CD14-positive monocyte (primary cell): ENCODE measurements at regions of chr4 and their contacts with region 1.

Region 1: GRCh38 chr4:42562016-42562415 is 94.9 kb downstream of the ATP8A1 start:
- DNase-seq: no peak
- H3K4me3 ChIP-seq: no peak overlapping the region
- H3K4me3 Mint-ChIP-seq: no peak overlapping the region
- H3K27ac ChIP-seq: no peak overlapping the region
- H3K27ac Mint-ChIP-seq: no peak overlapping the region
- H3K4me1 ChIP-seq: no peaks in the 10 kb centered on the region
- H3K4me1 Mint-ChIP-seq: no peaks in the 10 kb centered on the region
- H3K27me3 ChIP-seq: no peaks in the 10 kb centered on the region
- H3K27me3 Mint-ChIP-seq: no peaks in the 10 kb centered on the region
- CTCF ChIP-seq: no peak

Region 2: DNA sequence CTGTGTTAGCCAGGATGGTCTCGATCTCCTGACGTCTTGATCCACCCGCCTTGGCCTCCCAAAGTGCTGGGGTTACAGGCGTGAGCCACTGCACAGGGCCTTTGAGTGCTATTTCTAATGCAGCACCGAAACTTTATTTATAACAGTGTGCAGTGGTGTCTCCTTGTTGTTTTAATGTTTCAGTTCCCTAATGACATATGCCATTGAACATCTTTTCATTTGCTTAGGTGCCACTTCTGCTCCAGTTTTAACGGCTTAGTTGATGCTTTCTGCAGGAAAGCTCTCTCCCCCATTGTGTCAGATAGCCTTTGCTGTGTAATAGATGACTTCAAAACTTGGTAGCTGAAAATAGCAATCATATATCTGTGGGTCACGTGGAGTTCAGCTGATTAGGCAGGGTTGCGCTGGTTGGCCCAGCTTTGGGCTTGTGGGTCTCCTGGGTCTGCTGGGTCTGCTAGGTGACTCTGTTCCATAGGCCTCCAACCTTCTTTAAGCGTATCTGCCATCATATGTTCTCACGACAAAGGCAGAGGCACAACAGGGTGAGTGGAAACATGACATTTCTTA is 241.1 kb before region 1 on chr4:
- intact Hi-C with region 1: no loop called
- DNase-seq: no peak
- H3K4me3 ChIP-seq: no peak overlapping the region
- H3K4me3 Mint-ChIP-seq: no peak overlapping the region
- H3K27ac ChIP-seq: no peak overlapping the region
- H3K27ac Mint-ChIP-seq: no peak overlapping the region
- H3K4me1 ChIP-seq: no peaks in the 10 kb centered on the region
- H3K4me1 Mint-ChIP-seq: no peaks in the 10 kb centered on the region
- H3K27me3 ChIP-seq: no peaks in the 10 kb centered on the region
- H3K27me3 Mint-ChIP-seq: peaks cover 0 to 5% (median 0%) of the 10 kb centered on the region in 3 donors
- CTCF ChIP-seq: no peak

Region 3: DNA sequence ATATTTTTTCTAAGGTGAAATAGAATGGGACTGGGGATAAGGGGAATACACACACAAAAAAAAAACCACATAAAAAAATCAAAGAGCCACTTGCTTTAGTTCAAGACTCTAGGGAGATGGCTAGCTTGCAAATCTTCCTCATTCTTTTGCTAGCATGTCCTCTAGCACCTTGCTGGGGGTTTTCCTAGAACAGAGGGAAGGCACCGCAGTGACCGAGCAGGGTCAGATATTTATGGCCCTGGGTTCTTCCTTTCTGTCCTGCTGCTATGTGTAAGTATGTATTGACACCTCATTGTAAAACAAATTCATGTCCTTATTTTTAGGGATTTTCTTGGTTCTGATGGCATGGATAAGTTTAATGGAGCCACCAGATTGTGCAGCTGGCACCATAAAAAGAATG is 83.5 kb before region 1 on chr4:
- intact Hi-C with region 1: no loop called
- DNase-seq: no peak
- H3K4me3 ChIP-seq: no peak overlapping the region
- H3K4me3 Mint-ChIP-seq: no peak overlapping the region
- H3K27ac ChIP-seq: no peak overlapping the region
- H3K27ac Mint-ChIP-seq: no peak overlapping the region
- H3K4me1 ChIP-seq: no peaks in the 10 kb centered on the region
- H3K4me1 Mint-ChIP-seq: no peaks in the 10 kb centered on the region
- H3K27me3 ChIP-seq: no peaks in the 10 kb centered on the region
- H3K27me3 Mint-ChIP-seq: no peaks in the 10 kb centered on the region
- CTCF ChIP-seq: no peak

Region 4: DNA sequence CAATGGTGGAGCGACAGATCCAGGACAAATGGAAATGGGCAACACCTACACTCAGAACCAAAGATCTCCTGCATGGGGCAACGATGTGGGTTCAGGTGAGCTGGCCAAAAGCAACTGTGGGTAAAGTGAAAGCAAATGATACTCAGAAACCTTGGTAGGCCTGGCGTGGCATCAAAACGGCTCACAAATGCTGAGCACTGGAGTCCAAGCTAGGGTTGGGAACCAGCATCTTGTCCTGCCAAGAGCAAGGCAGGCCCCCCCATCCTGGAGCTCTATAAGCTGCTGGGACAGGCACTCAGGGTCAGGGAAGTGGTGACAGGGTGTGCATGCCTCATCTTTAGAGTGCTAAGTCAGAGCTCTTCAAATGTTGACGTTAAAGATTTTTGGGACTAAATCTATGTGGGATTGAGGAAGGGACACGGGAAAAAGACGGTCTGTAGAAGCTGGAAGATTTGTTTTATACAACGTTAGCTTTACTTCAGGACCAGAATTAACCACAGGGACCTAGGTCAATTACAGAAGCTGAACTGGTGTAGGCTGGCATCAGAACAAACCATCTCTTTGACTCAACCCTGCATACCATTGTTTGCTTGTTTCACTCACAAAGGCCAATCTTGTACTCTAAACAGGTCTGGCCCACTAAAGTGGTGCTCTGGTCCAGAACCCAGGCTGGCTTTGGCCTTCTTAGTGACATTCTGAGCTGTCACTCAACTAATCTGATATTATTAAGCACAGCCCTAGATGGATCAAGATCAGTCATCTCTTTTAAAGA is 84.2 kb after region 1 on chr4:
- intact Hi-C with region 1: no loop called
- DNase-seq: no peak
- H3K4me3 ChIP-seq: no peak overlapping the region
- H3K4me3 Mint-ChIP-seq: no peak overlapping the region
- H3K27ac ChIP-seq: no peak overlapping the region
- H3K27ac Mint-ChIP-seq: no peak overlapping the region
- H3K4me1 ChIP-seq: no peaks in the 10 kb centered on the region
- H3K4me1 Mint-ChIP-seq: peaks cover 8% of the 10 kb centered on the region
- H3K27me3 ChIP-seq: no peaks in the 10 kb centered on the region
- H3K27me3 Mint-ChIP-seq: no peaks in the 10 kb centered on the region
- CTCF ChIP-seq: no peak

Region 5: DNA sequence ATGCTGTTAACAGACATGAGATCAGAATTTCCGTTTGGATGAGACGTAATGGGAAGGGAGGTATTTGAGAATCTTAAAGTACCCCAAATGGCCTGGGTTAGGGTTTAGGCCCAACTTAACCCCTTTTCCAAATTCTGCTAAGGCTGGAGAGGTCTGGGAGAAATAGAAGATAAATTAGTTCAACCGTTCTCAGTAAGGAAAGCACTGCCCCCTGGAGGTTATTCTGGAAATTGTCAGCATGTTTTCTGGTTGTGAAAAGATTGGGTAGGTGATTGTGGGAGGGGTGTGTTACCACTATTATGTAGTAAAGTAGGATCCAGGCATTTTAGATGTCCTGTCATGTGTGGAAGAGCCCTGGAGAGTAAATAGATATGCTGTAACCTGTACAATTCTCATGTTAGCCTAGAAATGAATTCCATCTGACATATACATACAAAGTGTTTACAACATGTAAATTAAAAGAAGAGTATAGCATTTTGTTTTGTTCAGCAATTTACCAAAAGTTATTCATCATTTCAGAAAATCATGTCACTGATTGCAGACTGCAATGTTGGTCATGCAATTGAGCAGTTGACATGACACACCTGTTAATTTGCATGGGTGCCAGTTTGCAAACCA is 303.7 kb after region 1 on chr4:
- intact Hi-C with region 1: loop called (anchors 5 kb)
- DNase-seq: peak; percentile 15 to 36 (median 33)
- H3K4me3 ChIP-seq: no peak overlapping the region
- H3K4me3 Mint-ChIP-seq: no peak overlapping the region
- H3K27ac ChIP-seq: no peak overlapping the region
- H3K27ac Mint-ChIP-seq: no peak overlapping the region
- H3K4me1 ChIP-seq: no peaks in the 10 kb centered on the region
- H3K4me1 Mint-ChIP-seq: no peaks in the 10 kb centered on the region
- H3K27me3 ChIP-seq: no peaks in the 10 kb centered on the region
- H3K27me3 Mint-ChIP-seq: peaks cover 2 to 7% (median 6%) of the 10 kb centered on the region in 3 donors
- CTCF ChIP-seq: peak; percentile 82